ENCODE measurements at regions of chr12 and their contacts with region 1.

Region 1: DNA sequence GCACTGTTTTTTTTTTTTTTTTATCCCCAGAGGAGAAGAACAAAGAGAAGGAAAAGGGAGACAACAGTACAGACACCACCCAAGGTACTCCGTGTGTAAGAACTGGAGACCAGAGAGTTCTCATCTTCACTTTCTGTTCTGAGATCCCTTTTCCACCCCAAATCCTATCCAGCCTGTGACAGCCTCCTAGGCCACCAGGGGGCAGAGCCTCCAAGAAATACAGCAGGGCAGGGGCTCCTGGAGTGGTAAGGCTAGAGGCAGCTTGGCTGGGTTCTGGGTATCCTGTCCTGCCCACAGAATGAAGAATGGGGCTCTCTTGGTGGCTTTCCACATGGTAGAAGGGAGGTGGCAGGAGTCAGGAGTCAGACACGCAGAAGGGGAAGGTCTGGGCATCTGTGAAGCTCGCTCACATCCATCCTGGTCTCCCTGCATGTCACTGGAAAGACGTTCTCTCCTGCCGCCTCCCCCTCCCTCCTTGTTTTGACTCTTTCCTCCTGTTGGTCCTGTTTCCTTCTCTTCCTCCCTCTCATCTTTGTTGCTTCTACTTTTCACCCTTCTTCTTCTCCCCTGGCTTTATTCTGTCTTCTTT is 12.0 kb downstream of the CLSTN3 start:
- DNase-seq: peak; percentile 74
- H3K4me3 Mint-ChIP-seq: no peak overlapping the region
- H3K27ac Mint-ChIP-seq: no peak overlapping the region
- H3K4me1 Mint-ChIP-seq: peaks cover 2% of the 10 kb centered on the region
- H3K27me3 Mint-ChIP-seq: no peaks in the 10 kb centered on the region

Region 2: DNA sequence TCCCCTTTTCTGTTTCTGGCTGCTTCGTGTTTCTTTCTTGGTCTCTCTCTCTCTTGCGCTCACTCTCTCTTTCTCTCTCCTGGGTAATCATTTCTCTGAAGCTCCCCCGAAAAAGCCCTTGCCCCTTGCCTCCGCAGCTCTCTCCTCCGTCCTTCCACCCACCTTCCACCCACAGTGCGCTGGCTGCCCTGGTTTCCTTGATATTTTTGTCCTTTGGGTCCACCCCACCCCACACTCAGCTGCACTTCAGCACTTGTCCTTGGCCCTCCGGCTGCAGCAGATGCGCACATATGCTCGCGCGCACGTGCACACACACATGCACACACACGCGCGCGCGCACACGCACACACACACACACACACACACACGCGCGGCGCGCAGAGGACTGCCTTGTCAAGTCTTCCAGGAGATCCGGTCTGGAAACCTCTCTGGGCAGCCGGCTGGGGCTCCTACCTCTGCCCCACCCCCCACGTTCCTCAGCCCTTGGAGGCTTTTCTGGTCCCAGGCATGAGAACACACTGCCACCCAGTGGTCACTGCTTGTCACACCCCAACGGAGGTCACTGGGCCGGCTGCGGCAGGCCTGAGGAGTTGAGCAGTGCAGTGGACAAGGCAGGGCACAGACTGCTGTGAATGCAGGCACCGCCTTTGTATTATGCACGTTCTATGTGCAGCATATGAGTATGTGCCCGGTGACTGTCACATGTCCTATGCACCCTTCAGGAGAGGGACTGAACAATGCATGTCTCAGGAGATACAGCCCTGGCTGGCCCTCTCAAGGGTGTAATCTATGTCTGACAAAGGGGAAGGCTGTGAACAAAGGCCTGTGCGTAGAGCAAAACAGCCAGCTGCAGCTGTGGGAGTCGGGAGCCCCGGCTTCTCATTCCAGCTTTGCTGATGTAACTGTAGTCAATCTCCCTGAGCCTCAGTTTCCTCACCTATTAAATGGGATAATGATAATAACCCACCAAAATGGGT is 363.3 kb before region 1 on chr12:
- CTCF ChIA-PET with region 1: no interaction called
- intact Hi-C with region 1: no loop called
- DNase-seq: peak; percentile 96
- H3K4me3 Mint-ChIP-seq: peak overlapping the region; percentile 82
- H3K27ac Mint-ChIP-seq: peak overlapping the region; percentile 63
- H3K4me1 Mint-ChIP-seq: peaks cover 89% of the 10 kb centered on the region
- H3K27me3 Mint-ChIP-seq: no peaks in the 10 kb centered on the region

Region 3: DNA sequence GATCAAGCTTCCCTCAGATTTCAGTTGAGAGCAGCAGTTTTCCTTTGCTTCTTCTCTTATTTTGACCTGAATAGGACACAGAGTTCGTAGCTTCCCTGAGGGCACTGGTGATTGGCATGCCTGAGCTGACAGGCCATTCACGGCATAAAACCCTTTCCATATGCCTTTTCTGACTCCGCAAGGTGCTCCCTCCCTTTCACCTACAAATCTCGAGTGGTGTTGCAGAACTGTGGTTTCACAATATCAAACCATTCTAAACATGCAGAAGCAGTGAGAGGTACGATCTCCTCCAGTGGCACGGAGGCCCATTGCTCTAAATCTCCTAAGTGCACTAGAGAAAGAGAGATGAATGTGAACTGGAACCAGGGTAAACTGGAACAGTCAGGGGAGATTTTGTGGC is 11.9 kb after region 1 on chr12:
- CTCF ChIA-PET with region 1: interaction called, 13 read pairs
- intact Hi-C with region 1: no loop called
- DNase-seq: no peak
- H3K4me3 Mint-ChIP-seq: no peak overlapping the region
- H3K27ac Mint-ChIP-seq: no peak overlapping the region
- H3K4me1 Mint-ChIP-seq: no peaks in the 10 kb centered on the region
- H3K27me3 Mint-ChIP-seq: no peaks in the 10 kb centered on the region

Region 4: GRCh38 chr12:7907009-7907408 is 764.9 kb after region 1 on chr12:
- CTCF ChIA-PET with region 1: no interaction called
- intact Hi-C with region 1: no loop called
- DNase-seq: peak; percentile 42
- H3K4me3 Mint-ChIP-seq: no peak overlapping the region
- H3K27ac Mint-ChIP-seq: no peak overlapping the region
- H3K4me1 Mint-ChIP-seq: no peaks in the 10 kb centered on the region
- H3K27me3 Mint-ChIP-seq: no peaks in the 10 kb centered on the region

Measured in activated naive CD4-positive, alpha-beta T cell treated with anti-CD3 and anti-CD28 coated beads for 36 hours (primary cell).